Common myeloid progenitor, CD34-positive (primary cell): ENCODE measurements at regions of chr11 and their contacts with region 1.

Region 1: GRCh38 chr11:59197991-59198390 is 14.7 kb downstream of the MPEG1 start:
- DNase-seq: peak; percentile 60 to 86 (median 83)
- H3K4me3 ChIP-seq: peak overlapping the region in 1 of 7 experiments; percentile 27
- H3K27ac ChIP-seq: no peak overlapping the region
- H3K4me1 ChIP-seq: peaks cover 2 to 38% (median 14%) of the 10 kb centered on the region in 4 experiments
- H3K27me3 ChIP-seq: peaks cover 0 to 4% (median 0%) of the 10 kb centered on the region in 5 experiments

Region 2: GRCh38 chr11:59171508-59172322 is 26.3 kb before region 1 on chr11 and contains the start of gene DTX4:
- CTCF ChIA-PET with region 1: interaction called, 259 read pairs
- POLR2A ChIA-PET with region 1: interaction called, 4 read pairs
- DNase-seq: peak; percentile 91 to 95 (median 95)
- H3K4me3 ChIP-seq: peak within 1 kb of the TSS; percentile 61 to 82 (median 71)
- H3K27ac ChIP-seq: no peak within 1 kb of the TSS
- H3K4me1 ChIP-seq: peaks cover 0 to 21% (median 16%) of the 10 kb centered on the region in 4 experiments
- H3K27me3 ChIP-seq: peaks cover 0 to 34% (median 21%) of the 10 kb centered on the region in 5 experiments

Region 3: DNA sequence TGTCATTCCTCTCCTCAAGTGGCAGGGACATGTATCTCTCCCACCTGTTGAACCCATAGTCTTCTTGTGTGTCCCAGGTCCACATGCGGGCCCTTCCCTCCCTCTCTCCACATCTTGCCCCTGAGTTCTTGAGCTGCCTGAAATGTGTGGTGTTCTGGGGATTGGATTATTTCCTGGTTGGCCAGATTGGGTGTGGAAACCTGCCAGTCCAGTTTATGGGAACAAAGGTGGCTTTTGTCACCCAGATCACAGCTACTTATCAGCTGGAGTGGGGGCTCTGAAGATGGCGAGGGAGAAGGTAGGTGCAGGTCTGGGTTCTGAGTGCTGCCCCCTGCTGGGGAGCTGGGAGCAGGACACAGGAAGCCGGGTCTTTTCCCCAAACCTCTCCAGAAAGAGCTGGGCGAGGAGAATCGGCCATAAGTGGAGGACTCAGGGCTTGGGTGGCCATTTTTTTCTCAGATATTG is 11.8 kb before region 1 on chr11:
- CTCF ChIA-PET with region 1: interaction called, 259 read pairs
- POLR2A ChIA-PET with region 1: no interaction called
- DNase-seq: peak; percentile 25 to 38 (median 33)
- H3K4me3 ChIP-seq: no peak overlapping the region
- H3K27ac ChIP-seq: no peak overlapping the region
- H3K4me1 ChIP-seq: peaks cover 0 to 5% (median 1%) of the 10 kb centered on the region in 4 experiments
- H3K27me3 ChIP-seq: no peaks in the 10 kb centered on the region

Region 4: DNA sequence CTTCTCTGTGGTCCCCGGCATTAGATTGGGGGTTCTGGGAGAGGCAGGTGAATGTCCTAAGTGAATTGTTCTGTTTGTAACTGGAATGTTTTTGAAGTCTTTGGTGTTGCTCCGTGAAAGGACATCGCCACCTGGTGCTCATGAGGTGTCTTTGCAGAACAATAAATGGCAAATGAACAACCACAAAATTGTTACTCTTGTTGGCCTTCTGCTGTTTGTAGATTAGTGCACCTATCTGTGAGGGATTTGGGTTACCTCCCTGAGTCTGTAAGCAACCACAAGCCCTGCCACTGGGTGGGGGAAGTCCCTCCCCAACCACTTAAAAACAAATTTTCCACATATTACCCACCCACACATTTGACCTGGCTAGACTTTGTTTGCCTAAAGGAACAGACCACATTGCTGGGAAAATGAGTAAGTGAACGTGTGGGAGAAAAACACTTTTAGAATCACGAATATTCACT is 10.0 kb after region 1 on chr11:
- CTCF ChIA-PET with region 1: interaction called, 18 read pairs
- POLR2A ChIA-PET with region 1: no interaction called
- DNase-seq: peak; percentile 61 to 85 (median 80)
- H3K4me3 ChIP-seq: peak overlapping the region in 1 of 7 experiments; percentile 56
- H3K27ac ChIP-seq: no peak overlapping the region
- H3K4me1 ChIP-seq: peaks cover 0 to 14% (median 6%) of the 10 kb centered on the region in 4 experiments
- H3K27me3 ChIP-seq: no peaks in the 10 kb centered on the region

Region 5: DNA sequence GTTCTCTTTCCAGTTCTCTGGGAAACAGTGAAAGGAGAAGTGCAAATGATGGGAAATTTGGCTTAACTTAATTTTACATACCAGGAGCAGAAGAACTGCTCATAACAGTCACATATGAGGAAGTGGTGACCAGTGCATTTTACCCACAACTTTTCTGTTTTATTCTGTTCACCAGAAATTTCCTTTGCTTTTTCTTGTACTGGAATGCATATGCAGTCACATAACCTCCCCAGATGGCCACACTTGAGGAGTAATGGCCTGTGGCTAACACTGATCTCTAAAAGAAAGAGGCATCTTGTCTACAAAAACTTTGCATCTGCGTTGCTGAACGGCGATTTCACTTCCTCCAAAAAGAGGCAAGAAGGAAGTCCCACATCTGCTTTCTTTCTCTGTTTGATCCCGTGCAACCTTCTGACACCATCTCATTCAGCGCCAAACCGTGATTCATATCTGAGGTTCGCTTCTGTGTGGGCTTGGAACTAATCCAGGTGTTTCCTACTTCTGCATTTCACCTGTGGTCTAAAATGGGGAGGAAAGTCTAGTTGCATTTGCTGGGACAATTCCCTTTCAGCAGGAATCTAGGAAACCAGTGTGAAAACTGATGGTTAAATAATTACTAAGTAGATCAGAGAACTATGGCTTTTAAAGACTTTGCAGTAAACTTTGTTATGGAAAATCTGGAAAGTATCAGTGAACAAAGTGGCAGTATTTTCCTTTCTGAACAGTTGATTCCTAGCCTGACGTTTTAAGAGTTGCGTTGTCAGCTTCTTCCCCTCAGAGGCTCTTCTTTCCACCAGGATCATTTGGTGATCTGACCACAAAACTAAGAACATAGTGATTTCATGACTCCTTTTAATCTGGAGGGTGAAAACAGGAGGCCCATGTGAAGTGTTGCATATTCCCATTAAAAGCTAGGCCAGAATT is 18.9 kb after region 1 on chr11:
- CTCF ChIA-PET with region 1: interaction called, 18 read pairs
- POLR2A ChIA-PET with region 1: no interaction called
- DNase-seq: peak; percentile 84 to 98 (median 96)
- H3K4me3 ChIP-seq: peak overlapping the region in 5 of 7 experiments; percentile 0 to 40 (median 30)
- H3K27ac ChIP-seq: peak overlapping the region in 1 of 2 experiments; percentile 37
- H3K4me1 ChIP-seq: peaks cover 11 to 22% (median 18%) of the 10 kb centered on the region in 4 experiments
- H3K27me3 ChIP-seq: no peaks in the 10 kb centered on the region

Region 6: DNA sequence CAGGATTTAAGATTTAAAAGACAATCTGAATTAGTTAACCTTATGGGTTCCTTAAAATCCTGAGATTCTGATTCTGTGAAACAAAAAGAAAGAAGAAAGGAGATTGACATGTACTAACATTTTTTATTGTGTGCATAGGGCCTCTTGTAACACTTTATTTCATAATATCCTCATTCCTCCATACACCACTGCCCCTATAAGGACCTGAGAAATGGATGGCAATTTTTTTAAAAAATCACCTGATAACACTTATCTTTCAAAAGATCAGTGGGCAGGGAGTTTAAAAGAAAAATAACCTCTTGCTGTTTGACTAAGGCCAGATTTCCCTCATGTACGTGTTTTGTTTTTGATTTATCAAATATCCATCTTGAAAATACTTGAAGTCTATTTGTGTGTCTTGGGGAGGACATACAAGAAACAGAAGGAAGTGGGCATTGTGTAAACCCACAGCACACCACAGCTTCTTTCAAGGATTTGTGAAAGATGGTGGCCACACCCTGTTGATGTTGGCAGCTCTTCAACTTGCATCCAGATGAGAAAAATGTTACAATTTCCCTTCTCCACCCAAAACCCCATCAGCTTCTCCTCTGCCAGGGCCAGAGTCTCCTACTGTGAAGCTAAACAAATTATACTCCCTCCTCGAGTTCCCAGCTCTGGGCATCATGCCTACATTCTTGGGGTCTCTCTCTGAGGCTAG is 49.7 kb after region 1 on chr11:
- CTCF ChIA-PET with region 1: no interaction called
- POLR2A ChIA-PET with region 1: no interaction called
- DNase-seq: peak in 2 of 3 donors; percentile 68 to 70
- H3K4me3 ChIP-seq: no peak overlapping the region
- H3K27ac ChIP-seq: no peak overlapping the region
- H3K4me1 ChIP-seq: peaks cover 0 to 6% (median 3%) of the 10 kb centered on the region in 4 experiments
- H3K27me3 ChIP-seq: no peaks in the 10 kb centered on the region

Region 7: DNA sequence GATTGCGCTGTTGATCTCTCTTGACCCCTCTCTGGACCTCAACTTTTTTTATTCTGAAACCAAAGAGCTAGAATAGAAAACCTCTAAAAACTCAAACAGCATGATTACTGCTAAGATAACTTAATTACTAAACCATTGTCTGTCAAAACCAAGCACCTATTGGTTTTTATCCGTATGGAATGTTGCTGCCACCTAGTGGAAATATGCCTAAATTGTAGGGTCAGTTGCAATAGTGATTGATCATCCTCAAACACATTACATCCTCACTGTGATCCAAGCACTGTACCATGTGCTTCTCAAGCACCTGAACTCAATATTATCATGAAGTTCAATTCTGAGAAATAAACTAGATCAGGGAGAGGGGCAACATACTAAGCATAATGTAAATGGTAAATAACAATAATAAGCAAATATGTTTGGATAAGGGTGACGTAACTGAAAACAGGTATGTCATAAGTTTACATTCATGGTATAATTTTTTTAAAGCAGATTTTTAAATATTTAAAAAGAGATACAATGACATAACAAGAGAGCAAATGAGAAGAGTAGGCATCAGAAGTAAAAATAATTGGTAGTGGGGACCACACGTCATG is 232.0 kb after region 1 on chr11:
- CTCF ChIA-PET with region 1: interaction called, 12 read pairs
- POLR2A ChIA-PET with region 1: no interaction called
- DNase-seq: peak; percentile 72 to 85 (median 79)
- H3K4me3 ChIP-seq: no peak overlapping the region
- H3K27ac ChIP-seq: no peak overlapping the region
- H3K4me1 ChIP-seq: no peaks in the 10 kb centered on the region
- H3K27me3 ChIP-seq: no peaks in the 10 kb centered on the region